ENCODE measurements at regions of chr11 and their contacts with region 1.

Region 1: DNA sequence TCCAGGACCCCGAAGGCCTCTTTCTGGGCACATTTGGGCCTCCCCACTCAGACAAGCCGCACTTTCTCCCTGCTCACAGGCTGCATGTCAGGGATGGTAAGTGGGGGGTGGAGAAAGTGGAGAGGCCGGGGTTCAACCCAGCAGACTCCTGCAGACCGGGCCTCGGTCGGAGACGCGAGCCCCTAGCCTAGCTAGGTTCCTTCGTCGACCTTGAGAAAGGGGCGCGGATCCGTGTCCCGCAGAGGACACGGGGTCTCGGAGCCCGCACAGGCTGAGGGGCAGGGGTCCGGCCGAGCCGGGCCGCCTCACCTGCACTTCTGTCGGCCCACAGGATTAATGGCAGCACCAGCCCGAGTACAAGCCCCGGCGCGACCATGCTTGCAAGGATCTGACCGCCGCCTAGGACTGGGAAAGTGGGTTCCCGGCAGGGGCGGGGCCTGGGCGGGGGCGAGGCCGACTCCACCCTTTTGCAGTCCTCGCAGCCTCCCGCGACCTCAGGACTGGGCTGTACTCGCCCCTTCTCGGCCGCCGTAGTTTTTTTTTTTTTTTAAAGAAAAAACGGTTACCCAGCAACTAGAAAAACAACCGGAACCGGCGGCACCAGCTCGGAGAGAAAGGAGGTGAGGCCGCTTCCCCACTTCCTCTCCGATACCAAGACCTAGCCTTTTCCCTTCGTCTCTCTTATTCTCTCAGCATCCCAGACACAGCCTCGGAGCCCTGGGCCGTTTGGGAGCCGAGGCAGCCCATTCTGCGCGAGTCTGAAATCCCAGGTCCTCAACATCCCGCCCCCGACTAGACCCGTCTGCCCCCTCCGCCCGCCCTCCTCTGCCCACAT is at the starts of genes SIAE and SPA17:
- DNase-seq: peak; percentile 97
- H3K4me3 Mint-ChIP-seq: peak within 1 kb of the TSS; percentile 91
- H3K27ac Mint-ChIP-seq: peak within 1 kb of the TSS; percentile 92
- H3K4me1 Mint-ChIP-seq: peaks cover 31% of the 10 kb centered on the region
- H3K27me3 Mint-ChIP-seq: no peaks in the 10 kb centered on the region
- total RNA-seq, gene SIAE: 5.3 and 6.4 TPM in 2 replicates
- total RNA-seq, gene SPA17: 1.6 and 2.4 TPM in 2 replicates

Region 2: GRCh38 chr11:124739479-124740276 is 66.1 kb after region 1 on chr11 and contains the start of gene NRGN:
- intact Hi-C with region 1: loop called (anchors 1 kb)
- DNase-seq: peak; percentile 95
- H3K4me3 Mint-ChIP-seq: peak within 1 kb of the TSS; percentile 79
- H3K27ac Mint-ChIP-seq: peak within 1 kb of the TSS; percentile 31
- H3K4me1 Mint-ChIP-seq: peaks cover 11% of the 10 kb centered on the region
- H3K27me3 Mint-ChIP-seq: peaks cover 56% of the 10 kb centered on the region
- total RNA-seq, gene NRGN: 4.4 and 5.4 TPM in 2 replicates

Region 3: DNA sequence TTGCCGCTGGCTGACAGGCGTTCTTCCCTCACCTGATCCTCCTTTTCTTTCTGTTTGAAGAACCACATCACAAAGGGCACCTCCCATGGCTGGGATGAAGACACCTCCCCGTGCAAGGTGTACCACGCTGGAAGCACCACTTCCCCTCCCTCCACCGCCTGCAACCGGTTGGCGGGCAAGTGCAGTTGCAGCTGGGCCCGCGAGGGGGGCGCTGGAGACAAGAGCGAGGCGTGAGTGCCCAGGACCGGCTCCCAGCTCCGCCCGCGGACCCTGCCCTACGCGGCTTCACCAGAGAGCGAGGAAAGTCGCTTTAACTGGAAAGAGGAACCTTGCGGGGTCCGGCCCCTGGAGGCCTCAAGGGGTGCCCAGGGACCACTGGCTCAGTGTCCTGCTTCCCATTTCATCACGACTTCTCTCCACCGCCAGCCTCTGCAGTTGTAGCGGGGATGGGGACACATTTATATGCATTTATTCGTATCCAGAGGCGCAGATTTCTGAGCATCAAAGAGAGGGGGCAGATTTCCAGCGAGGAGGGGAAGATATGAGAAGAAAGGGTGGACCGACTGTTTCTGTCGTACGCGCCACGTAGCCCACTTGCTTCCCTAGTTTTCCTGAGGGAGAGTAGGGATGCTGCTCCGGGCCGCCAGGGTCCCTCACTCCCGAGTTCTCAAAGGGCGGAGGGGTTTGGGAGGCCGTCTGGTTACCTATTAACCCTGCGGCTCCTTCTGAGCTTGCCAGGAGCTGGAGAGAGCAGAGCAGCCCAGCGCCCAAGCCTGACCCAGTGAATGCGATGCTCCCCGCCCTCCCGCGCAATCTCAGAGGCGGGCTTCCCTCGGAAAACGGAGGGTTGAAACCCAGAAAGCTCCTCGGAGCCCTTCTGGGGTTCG is 85.0 kb after region 1 on chr11:
- intact Hi-C with region 1: loop called (anchors 1 kb)
- DNase-seq: peak; percentile 92
- H3K4me3 Mint-ChIP-seq: peak overlapping the region; percentile 80
- H3K27ac Mint-ChIP-seq: no peak overlapping the region
- H3K4me1 Mint-ChIP-seq: peaks cover 12% of the 10 kb centered on the region
- H3K27me3 Mint-ChIP-seq: peaks cover 45% of the 10 kb centered on the region

Region 4: DNA sequence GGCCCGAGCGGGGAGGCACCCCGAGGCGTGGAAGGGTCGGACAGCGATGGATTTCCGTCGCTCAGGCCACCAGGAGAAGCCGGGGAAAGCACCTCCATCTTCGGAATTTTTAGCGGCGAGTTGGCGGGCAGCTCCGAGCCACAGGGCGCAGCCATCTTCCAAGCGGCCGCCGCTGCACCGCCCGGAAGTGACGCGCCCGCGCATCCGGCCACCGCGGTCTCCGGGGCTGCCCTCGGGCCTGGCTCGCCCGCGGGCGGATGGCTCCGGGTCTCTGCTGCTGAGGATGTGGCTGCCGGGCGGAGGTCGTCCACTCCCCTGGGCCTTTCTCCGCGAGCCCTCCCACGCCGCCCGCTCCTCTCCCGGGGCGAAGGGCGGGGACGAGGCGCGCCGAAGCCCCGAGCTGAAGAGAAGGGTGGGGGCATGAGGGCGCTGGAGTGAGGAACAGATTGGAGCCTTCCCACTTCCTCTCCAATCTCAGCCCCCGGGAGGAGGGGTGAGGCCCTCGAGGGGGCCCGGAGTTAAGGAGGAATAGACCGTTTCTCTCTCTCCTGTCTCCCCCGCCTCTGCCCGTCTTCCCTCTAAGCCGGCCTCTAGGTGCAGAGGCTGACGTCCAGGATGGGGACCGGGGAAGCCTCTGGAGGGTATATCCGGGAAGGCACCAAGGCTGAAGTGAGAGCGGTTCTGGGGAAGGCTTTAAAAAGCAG is 126.8 kb after region 1 on chr11 and contains the start of gene MSANTD2:
- intact Hi-C with region 1: loop called (anchors 1 kb)
- DNase-seq: peak; percentile 96
- H3K4me3 Mint-ChIP-seq: peak within 1 kb of the TSS; percentile 95
- H3K27ac Mint-ChIP-seq: peak within 1 kb of the TSS; percentile 90
- H3K4me1 Mint-ChIP-seq: peaks cover 21% of the 10 kb centered on the region
- H3K27me3 Mint-ChIP-seq: peaks cover 16% of the 10 kb centered on the region
- total RNA-seq, gene MSANTD2: 10.6 TPM in 2 replicates

Region 5: DNA sequence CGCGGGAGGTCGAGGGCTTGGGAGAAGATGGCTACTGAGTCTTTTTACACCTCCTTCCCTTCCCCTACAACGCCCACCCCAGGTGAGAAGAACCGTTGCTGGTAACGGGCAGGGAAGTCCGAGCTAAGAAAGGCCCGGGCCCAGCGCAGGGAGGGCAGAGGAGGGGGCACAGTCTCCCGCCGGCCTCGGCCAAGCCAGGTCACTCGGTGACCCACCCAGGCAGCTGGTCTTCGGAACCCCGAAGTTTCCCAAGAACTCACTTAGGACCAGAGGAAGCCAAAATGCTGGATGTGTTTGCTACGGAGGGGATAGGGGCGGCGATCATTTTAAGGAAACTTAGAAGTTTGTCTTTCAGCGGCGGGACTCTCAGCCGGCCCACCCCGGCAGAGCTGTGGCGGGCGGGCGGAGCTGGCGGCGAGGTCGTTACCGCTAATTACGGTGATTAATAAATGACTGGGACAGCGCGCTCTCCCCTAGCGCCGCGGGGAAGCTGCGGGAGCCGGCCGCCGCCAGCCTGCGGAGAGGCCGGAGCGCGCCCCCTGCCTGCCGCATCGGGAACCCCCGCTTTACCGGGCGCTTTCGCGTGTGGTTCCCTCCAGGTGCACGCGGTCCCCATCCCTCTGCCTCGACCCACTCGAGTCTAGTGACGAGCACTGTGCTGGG is 192.5 kb after region 1 on chr11:
- intact Hi-C with region 1: loop called (anchors 2 kb)
- DNase-seq: peak; percentile 86
- H3K4me3 Mint-ChIP-seq: peak overlapping the region; percentile 11
- H3K27ac Mint-ChIP-seq: peak overlapping the region; percentile 23
- H3K4me1 Mint-ChIP-seq: peaks cover 8% of the 10 kb centered on the region
- H3K27me3 Mint-ChIP-seq: peaks cover 92% of the 10 kb centered on the region

Region 6: DNA sequence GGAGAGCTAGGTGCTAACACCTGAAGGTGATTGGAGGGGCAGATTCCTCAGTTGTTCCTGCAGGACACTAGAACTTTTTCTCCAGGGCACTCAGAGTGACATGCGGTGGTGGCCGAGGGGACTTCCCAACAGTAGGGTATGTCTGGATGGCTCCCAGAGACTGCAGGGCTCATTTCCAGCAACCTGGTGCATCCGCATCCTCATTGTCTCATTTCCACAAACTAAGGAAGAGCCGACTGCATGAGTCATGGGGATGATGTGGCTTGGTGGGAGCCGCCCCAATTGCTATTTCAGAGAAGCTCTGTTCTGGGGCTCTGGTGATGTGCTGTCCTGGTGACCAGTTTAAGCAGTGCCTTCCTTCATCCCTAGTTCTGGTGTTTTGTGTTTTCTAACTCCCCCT is 226.9 kb after region 1 on chr11:
- intact Hi-C with region 1: no loop called
- DNase-seq: no peak
- H3K4me3 Mint-ChIP-seq: no peak overlapping the region
- H3K27ac Mint-ChIP-seq: no peak overlapping the region
- H3K4me1 Mint-ChIP-seq: peaks cover 4% of the 10 kb centered on the region
- H3K27me3 Mint-ChIP-seq: peaks cover 37% of the 10 kb centered on the region

Region 7: GRCh38 chr11:125111343-125112207 is 438.0 kb after region 1 on chr11 and contains the start of gene TMEM218:
- intact Hi-C with region 1: loop called (anchors 2 kb)
- DNase-seq: peak; percentile 99
- H3K4me3 Mint-ChIP-seq: peak within 1 kb of the TSS; percentile 100
- H3K27ac Mint-ChIP-seq: peak within 1 kb of the TSS; percentile 100
- H3K4me1 Mint-ChIP-seq: peaks cover 20% of the 10 kb centered on the region
- H3K27me3 Mint-ChIP-seq: peaks cover 2% of the 10 kb centered on the region
- total RNA-seq, gene TMEM218: 17.3 and 18.2 TPM in 2 replicates

Measured in activated CD4-positive, alpha-beta T cell treated with anti-CD3 and anti-CD28 coated beads, Interleukin-2, amount 10 ng/mL, durations not matched to agents 24 days and 14 days (primary cell).